Endothelial cell of umbilical vein (primary cell): ENCODE measurements at regions of chr15 and their contacts with region 1.

Region 1: DNA sequence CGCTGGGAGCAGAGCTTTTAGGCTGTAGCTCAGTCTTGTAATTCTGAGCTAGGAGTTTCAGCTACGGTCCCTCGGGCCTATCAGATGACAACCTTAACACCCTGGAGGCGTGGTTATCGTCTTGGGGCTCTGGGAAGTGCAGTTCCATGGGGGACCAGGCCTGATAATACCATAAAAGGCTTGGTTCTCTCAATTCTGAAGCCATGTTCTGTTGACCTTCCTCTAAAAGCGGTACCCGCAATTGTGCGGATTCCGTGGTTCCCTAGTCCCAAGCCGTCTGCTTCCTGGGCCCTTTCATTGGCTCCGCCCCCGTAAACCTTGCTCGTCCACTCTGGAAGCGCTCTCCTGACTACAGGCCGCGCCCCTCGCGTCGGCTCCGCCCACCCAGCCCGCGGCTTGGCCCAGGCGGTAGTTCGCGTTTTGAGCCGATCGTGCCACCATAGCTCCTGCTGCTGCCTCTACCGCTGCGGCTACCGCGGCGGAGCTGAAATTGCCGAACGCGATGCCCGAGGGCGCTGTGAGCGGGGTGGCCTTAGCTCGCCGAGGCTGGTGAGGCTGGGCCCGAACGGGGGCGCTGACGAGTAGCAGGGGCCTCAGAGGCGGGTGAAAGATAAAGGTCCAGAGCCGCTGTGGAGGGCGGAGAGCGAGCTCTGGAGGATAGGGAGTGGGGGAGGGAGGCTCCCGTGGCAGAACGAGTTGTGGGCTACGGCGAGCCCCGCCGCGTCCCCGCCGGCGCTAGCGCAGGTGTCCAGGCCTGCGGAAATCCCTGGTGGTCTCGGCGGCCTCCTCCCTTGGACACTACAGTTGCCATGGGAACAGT is at the start of gene MAPKBP1:
- DNase-seq: peak; percentile 99
- H3K4me3 ChIP-seq: peak within 1 kb of the TSS; percentile 35 to 69 (median 56)
- H3K27ac ChIP-seq: peak within 1 kb of the TSS; percentile 48
- H3K4me1 ChIP-seq: peaks cover 54% of the 10 kb centered on the region
- H3K27me3 ChIP-seq: no peaks in the 10 kb centered on the region
- CTCF ChIP-seq: peak; percentile 93 to 94
- POLR2A ChIP-seq: no peak
- total RNA-seq, gene MAPKBP1: 49.1 and 55.8 TPM in 2 replicates

Region 2: GRCh38 chr15:41283653-41284426 is 490.4 kb before region 1 on chr15:
- CTCF ChIA-PET with region 1: no interaction called
- POLR2A ChIA-PET with region 1: no interaction called
- dilution Hi-C with region 1: no loop called
- intact Hi-C with region 1: no loop called
- DNase-seq: peak; percentile 100
- H3K4me3 ChIP-seq: peak overlapping the region; percentile 83 to 96 (median 95)
- H3K27ac ChIP-seq: peak overlapping the region; percentile 62
- H3K4me1 ChIP-seq: peaks cover 6% of the 10 kb centered on the region
- H3K27me3 ChIP-seq: no peaks in the 10 kb centered on the region
- CTCF ChIP-seq: no peak
- POLR2A ChIP-seq: peak; percentile 97

Region 3: DNA sequence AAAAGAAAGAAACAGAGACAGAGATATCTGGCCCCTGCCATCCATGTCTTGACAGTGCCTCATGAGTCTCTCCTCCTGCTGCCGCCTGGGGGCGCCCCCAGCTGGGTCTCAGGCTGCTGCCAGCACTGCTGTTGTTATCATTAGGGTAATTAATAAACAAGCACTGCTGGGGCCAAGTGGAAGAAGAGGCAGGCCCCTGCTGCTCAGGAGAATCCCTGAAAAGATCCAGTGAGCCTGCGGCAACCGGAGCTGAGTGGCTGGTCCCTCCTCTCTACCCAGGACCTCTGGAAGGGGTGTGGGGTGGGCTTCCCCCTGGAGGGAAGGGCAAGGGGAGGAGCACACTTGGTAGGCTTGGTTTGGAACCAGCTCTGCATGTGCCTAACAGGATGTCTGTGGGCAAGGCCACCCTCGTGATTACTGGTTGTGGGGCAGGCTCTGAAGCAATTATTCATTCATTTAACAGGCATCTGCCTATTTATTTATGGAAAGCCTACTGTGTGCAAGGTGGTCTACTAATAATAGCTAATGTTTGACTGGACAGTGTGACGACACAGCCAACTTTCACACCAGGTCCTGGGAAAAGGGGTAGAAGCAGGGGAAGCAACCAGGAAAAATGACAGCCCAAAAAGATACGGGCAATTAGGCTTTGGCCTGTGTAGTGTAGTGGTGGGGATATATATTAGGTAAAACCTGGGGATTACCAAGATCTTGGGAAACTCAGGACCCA is 216.4 kb before region 1 on chr15:
- CTCF ChIA-PET with region 1: interaction called, 6 read pairs
- POLR2A ChIA-PET with region 1: no interaction called
- dilution Hi-C with region 1: no loop called
- intact Hi-C with region 1: loop called (anchors 1 kb)
- DNase-seq: peak; percentile 82
- H3K4me3 ChIP-seq: peak overlapping the region in 1 of 3 experiments; percentile 35
- H3K27ac ChIP-seq: no peak overlapping the region
- H3K4me1 ChIP-seq: peaks cover 22% of the 10 kb centered on the region
- H3K27me3 ChIP-seq: no peaks in the 10 kb centered on the region
- CTCF ChIP-seq: peak; percentile 90 to 91
- POLR2A ChIP-seq: no peak

Region 4: DNA sequence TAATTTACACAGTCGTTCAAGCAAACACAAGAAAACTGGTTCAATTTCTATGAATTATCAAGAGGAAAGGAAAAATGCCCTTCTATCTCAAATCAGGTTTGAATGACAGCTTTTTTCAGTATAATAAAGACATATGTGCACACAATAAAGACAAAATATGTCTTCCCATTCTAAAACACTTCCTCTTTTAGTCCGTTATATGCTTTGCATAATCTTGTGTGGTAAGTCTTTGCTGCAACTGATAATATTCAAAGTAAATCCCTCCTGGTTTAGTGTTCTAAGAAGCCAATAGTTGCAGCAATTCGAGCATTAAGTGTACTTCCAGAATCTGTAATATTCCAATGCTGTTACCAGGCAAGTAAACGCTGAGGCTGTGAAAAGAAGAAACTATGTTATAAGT is 43.7 kb before region 1 on chr15:
- CTCF ChIA-PET with region 1: no interaction called
- POLR2A ChIA-PET with region 1: no interaction called
- dilution Hi-C with region 1: no loop called
- intact Hi-C with region 1: no loop called
- DNase-seq: no peak
- H3K4me3 ChIP-seq: no peak overlapping the region
- H3K27ac ChIP-seq: no peak overlapping the region
- H3K4me1 ChIP-seq: no peaks in the 10 kb centered on the region
- H3K27me3 ChIP-seq: no peaks in the 10 kb centered on the region
- CTCF ChIP-seq: no peak
- POLR2A ChIP-seq: no peak

Region 5: GRCh38 chr15:41790756-41791546 is 16.7 kb after region 1 on chr15:
- CTCF ChIA-PET with region 1: interaction called, 219 read pairs
- POLR2A ChIA-PET with region 1: interaction called, 9 read pairs
- dilution Hi-C with region 1: no loop called
- intact Hi-C with region 1: loop called (anchors 1 kb)
- DNase-seq: peak; percentile 85
- H3K4me3 ChIP-seq: peak overlapping the region in 1 of 3 experiments; percentile 1
- H3K27ac ChIP-seq: peak overlapping the region; percentile 93
- H3K4me1 ChIP-seq: peaks cover 53% of the 10 kb centered on the region
- H3K27me3 ChIP-seq: no peaks in the 10 kb centered on the region
- CTCF ChIP-seq: no peak
- POLR2A ChIP-seq: peak; percentile 60

Region 6: DNA sequence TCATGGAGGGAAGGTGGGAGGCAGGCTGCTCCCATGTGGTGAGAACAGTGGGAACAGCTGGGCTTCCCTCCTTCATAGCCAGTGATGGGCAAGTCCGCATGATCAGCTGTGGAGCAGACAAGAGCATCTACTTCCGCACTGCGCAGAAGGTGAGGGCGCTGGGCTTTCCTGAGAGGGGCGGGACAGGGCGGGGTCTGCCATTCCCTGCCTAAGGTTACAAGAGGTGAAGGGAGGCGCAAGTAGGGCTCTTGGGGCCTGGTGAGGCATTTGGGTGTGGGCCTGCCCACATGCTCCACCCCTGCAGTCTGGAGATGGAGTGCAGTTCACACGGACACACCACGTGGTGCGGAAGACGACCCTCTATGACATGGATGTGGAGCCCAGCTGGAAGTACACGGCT is 43.0 kb after region 1 on chr15:
- CTCF ChIA-PET with region 1: interaction called, 754 read pairs
- POLR2A ChIA-PET with region 1: interaction called, 3 read pairs
- dilution Hi-C with region 1: no loop called
- intact Hi-C with region 1: no loop called
- DNase-seq: no peak
- H3K4me3 ChIP-seq: no peak overlapping the region
- H3K27ac ChIP-seq: no peak overlapping the region
- H3K4me1 ChIP-seq: no peaks in the 10 kb centered on the region
- H3K27me3 ChIP-seq: no peaks in the 10 kb centered on the region
- CTCF ChIP-seq: no peak
- POLR2A ChIP-seq: no peak

Region 7: DNA sequence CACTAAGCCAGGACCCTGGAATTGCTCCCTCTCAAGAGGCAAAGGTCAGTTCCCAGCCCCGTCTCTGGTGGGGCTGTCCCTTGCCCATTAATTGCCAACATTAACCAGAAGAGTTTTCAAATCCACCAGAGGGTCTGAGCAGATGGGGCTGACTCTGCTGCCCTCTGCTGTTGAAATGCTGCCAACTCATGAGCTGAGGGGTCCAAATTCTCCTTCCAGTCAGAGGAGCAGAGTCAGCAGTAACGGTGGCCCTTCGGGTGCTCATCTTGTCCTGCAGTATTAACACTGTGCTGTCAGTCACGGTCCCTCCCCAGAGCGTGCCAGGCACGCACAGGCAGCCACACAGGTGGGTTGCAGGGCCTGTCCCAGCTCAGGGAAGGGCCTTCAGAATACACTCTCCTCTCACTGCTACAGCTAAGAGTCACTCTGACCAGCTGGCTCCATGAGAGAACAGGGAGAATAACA is 130.3 kb after region 1 on chr15:
- CTCF ChIA-PET with region 1: interaction called, 41 read pairs
- POLR2A ChIA-PET with region 1: no interaction called
- dilution Hi-C with region 1: no loop called
- intact Hi-C with region 1: loop called (anchors 1 kb)
- DNase-seq: peak; percentile 75
- H3K4me3 ChIP-seq: no peak overlapping the region
- H3K27ac ChIP-seq: no peak overlapping the region
- H3K4me1 ChIP-seq: no peaks in the 10 kb centered on the region
- H3K27me3 ChIP-seq: no peaks in the 10 kb centered on the region
- CTCF ChIP-seq: peak; percentile 85
- POLR2A ChIP-seq: no peak